A549 (cell line): ENCODE measurements at regions of chr19 and their contacts with region 1.

Region 1: DNA sequence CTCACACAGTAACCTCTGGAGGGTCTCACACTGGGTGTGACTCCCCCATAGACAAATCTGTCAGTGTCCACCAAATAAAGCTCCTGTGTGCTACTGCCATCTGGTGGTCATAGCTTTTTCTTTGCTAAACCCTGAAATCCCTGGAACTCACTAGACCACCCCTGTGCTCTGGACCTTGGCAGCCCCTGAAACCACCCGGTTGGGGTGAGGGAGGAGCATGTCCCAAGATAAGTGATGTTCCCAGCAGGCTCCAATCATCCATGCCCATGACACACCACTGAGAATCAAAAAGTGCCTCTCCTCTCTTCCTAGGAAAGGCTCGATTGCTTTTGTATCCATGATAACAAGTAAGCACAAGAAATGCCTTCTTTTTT is 6.5 kb upstream of the HSD17B14 start:
- DNase-seq: peak; percentile 48 to 71
- ATAC-seq: peak; percentile 75 to 82
- H3K4me3 ChIP-seq: no peak overlapping the region
- H3K27ac ChIP-seq: no peak overlapping the region
- H3K4me1 ChIP-seq: 0 out of 3 replicates have a peak, but pooled peaks cover under 1% of the 10 kb centered on the region
- CTCF ChIP-seq: peak; percentile 97
- EP300 ChIP-seq: no peak
- POLR2A ChIP-seq: no peak
- RAD21 ChIP-seq: peak; percentile 86 to 89

Region 2: GRCh38 chr19:48646001-48646721 is 196.6 kb before region 1 on chr19 and contains the start of gene CA11:
- CTCF ChIA-PET with region 1: interaction called, 31 read pairs
- POLR2A ChIA-PET with region 1: no interaction called
- DNase-seq: peak; percentile 91 to 97
- ATAC-seq: peak; percentile 85 to 90
- H3K4me3 ChIP-seq: peak within 1 kb of the TSS; percentile 54
- H3K27ac ChIP-seq: peak within 1 kb of the TSS; percentile 87 to 88
- H3K4me1 ChIP-seq: peaks cover 18% of the 10 kb centered on the region; the same call in 2 of the 3 replicates
- CTCF ChIP-seq: peak; percentile 90
- EP300 ChIP-seq: no peak
- POLR2A ChIP-seq: no peak; the same call in 1 of the 2 replicates
- RAD21 ChIP-seq: peak; percentile 97 to 98
- polyA plus RNA-seq, gene CA11: 8.8 and 9.8 TPM in 2 replicates

Region 3: GRCh38 chr19:48738557-48739399 is 104.0 kb before region 1 on chr19:
- CTCF ChIA-PET with region 1: interaction called, 10 read pairs
- POLR2A ChIA-PET with region 1: no interaction called
- DNase-seq: peak; percentile 87 to 95
- ATAC-seq: peak; percentile 80 to 85
- H3K4me3 ChIP-seq: peak overlapping the region; percentile 59
- H3K27ac ChIP-seq: peak overlapping the region; percentile 82 to 89
- H3K4me1 ChIP-seq: peaks cover 16% of the 10 kb centered on the region
- CTCF ChIP-seq: peak; percentile 92
- EP300 ChIP-seq: no peak
- POLR2A ChIP-seq: peak; percentile 64
- RAD21 ChIP-seq: peak; percentile 34 to 81; a peak in 4 of 5 replicates

Region 4: DNA sequence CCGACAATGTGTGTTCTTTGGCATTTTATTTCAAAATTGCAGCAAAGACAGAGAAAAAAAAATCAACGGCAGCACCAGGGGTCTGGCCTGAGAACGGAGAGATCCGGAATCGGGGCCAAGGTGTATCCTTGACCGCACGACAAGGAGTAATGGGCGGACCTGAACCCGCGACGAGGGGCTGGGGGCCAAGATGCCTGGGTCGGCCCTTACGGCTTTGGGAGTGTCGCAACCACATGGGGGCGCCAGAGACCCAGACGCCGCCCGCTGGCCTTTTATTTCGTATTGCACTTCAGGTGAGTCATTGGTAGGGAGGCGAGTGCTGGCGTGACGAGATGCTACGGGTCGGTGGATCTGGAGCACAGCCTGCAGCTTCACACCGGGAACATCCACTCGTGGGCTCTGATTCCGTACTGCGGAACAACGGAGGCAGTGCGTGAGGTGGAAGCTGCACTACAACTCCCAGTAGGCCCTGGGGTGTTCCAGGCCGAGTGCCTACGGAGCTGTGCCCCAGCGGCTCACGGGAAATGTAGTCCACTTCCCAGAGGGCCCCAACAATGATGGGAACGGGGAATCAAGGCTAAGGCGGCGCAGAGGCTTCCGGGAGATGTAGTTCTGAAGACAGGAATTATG is 47.6 kb before region 1 on chr19:
- CTCF ChIA-PET with region 1: interaction called, 927 read pairs
- POLR2A ChIA-PET with region 1: interaction called, 5 read pairs
- DNase-seq: peak; percentile 96 to 98
- ATAC-seq: peak; percentile 94 to 99
- H3K4me3 ChIP-seq: peak overlapping the region; percentile 43
- H3K27ac ChIP-seq: peak overlapping the region; percentile 64 to 83
- H3K4me1 ChIP-seq: peaks cover 5% of the 10 kb centered on the region; the same call in 2 of the 3 replicates
- CTCF ChIP-seq: peak; percentile 99
- EP300 ChIP-seq: no peak
- POLR2A ChIP-seq: no peak
- RAD21 ChIP-seq: peak; percentile 89 to 98

Region 5: GRCh38 chr19:48826606-48827020 is 16.2 kb before region 1 on chr19:
- CTCF ChIA-PET with region 1: interaction called, 70 read pairs
- POLR2A ChIA-PET with region 1: interaction called, 3 read pairs
- DNase-seq: peak in 1 of 2 experiments; percentile 56
- ATAC-seq: peak; percentile 50 to 52; a peak in 2 of 6 replicates
- H3K4me3 ChIP-seq: no peak overlapping the region
- H3K27ac ChIP-seq: no peak overlapping the region
- H3K4me1 ChIP-seq: no peaks in the 10 kb centered on the region
- CTCF ChIP-seq: no peak
- EP300 ChIP-seq: no peak
- POLR2A ChIP-seq: no peak
- RAD21 ChIP-seq: no peak

Region 6: GRCh38 chr19:48881741-48882657 is 39.2 kb after region 1 on chr19:
- CTCF ChIA-PET with region 1: interaction called, 14 read pairs
- POLR2A ChIA-PET with region 1: no interaction called
- DNase-seq: peak in 1 of 2 experiments; percentile 58
- ATAC-seq: peak; percentile 56 to 58
- H3K4me3 ChIP-seq: no peak overlapping the region
- H3K27ac ChIP-seq: no peak overlapping the region
- H3K4me1 ChIP-seq: no peaks in the 10 kb centered on the region; the same call in 2 of the 3 replicates
- CTCF ChIP-seq: no peak
- EP300 ChIP-seq: no peak
- POLR2A ChIP-seq: no peak
- RAD21 ChIP-seq: no peak

Region 7: GRCh38 chr19:48993175-48994034 is 150.6 kb after region 1 on chr19 and contains the starts of genes GYS1 and RUVBL2:
- CTCF ChIA-PET with region 1: interaction called, 20 read pairs
- POLR2A ChIA-PET with region 1: interaction called, 3 read pairs
- DNase-seq: peak; percentile 100
- ATAC-seq: peak; percentile 89 to 94
- H3K4me3 ChIP-seq: peak within 1 kb of the TSS; percentile 73
- H3K27ac ChIP-seq: peak within 1 kb of the TSS; percentile 76 to 87
- H3K4me1 ChIP-seq: peaks cover 20% of the 10 kb centered on the region
- CTCF ChIP-seq: peak; percentile 82
- EP300 ChIP-seq: no peak
- POLR2A ChIP-seq: peak; percentile 92
- RAD21 ChIP-seq: peak in 1 of 2 experiments; percentile 39; a peak in 2 of 5 replicates
- polyA plus RNA-seq, gene GYS1: 10.3 and 16.4 TPM in 2 replicates
- polyA plus RNA-seq, gene RUVBL2: 146 and 186 TPM in 2 replicates

Region 8: GRCh38 chr19:49017666-49018351 is 175.0 kb after region 1 on chr19:
- CTCF ChIA-PET with region 1: no interaction called
- POLR2A ChIA-PET with region 1: no interaction called
- DNase-seq: peak in 1 of 2 experiments; percentile 52
- ATAC-seq: peak; percentile 27 to 66
- H3K4me3 ChIP-seq: peak overlapping the region; percentile 21; the same call in 1 of the 3 replicates
- H3K27ac ChIP-seq: peak overlapping the region in 1 of 2 experiments; percentile 36; a peak in 1 of 6 replicates
- H3K4me1 ChIP-seq: peaks cover 14% of the 10 kb centered on the region; the same call in 2 of the 3 replicates
- CTCF ChIP-seq: peak; percentile 33
- EP300 ChIP-seq: no peak
- POLR2A ChIP-seq: no peak
- RAD21 ChIP-seq: no peak